HAP-1 (cell line): ENCODE measurements at regions of chr4 and their contacts with region 1.

Region 1: GRCh38 chr4:7802093-7802726 is 137.5 kb downstream of the AFAP1 start:
- DNase-seq: peak; percentile 71 to 87
- H3K4me3 ChIP-seq: no peak overlapping the region
- H3K4me1 ChIP-seq: no peaks in the 10 kb centered on the region
- H3K27me3 ChIP-seq: no peaks in the 10 kb centered on the region

Region 2: DNA sequence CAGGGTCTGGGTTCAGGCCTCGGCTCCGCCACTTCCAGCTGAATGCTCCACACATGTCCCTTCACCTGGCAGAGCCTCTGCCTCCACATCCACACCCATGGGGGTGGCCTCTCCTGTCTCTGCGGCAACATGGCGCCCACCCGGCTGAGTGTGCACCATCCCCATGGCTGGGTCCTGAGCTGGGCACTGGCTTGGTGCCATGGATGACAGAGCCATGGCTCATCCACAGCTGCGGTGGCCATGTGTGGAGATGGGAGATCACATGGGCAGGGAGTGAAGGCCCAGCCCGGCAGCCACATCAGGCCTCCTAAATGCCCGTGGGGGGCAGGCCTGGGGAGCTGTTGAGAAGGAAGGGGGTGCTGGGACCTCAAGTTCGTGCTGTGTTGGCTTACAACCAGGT is 76.3 kb before region 1 on chr4:
- in situ Hi-C with region 1: no loop called
- DNase-seq: no peak
- H3K4me3 ChIP-seq: no peak overlapping the region
- H3K4me1 ChIP-seq: no peaks in the 10 kb centered on the region
- H3K27me3 ChIP-seq: peaks cover 6% of the 10 kb centered on the region; the same call in 1 of the 2 replicates

Region 3: DNA sequence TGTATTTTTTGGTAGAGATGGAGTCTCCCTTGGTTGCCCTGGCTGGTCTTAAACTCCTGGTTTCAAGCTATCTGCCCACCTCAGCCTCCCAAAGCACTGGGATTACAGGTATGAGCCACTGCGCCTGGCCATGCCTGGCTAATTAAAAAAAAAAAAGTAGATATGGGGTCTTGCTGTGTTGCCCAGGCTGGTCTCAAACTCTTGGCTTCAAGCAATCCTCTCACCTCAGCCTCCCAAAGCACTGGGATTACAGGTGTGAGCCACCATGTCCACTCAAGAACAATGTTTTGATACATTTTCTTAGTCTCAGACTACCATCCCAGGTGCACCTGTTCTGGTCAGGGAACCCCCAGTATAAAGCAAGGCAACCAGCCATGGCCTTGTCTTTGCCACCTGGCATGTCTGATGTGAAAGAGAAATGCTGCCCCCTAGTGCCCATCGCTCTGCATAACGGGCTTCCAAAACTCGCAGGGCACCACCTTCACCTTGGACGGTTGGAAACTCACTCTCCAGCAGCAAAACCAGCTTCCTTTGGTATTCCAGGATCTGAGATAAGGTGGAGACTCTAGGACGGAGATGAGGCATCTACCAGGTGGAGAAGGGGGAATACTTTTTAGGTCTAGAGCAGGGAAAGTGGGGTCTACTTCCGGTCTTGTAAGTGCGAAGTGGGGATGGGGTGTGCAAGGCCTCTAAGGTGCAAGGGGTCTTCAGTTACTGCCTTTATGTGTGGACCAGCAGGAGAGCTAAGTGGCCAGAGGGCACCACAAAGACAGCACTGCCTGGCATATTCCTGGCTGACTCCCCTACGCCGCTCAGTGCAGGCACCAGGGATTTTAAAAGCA is 185.2 kb after region 1 on chr4:
- in situ Hi-C with region 1: loop called (anchors 5 kb)
- DNase-seq: peak; percentile 59 to 88
- H3K4me3 ChIP-seq: no peak overlapping the region
- H3K4me1 ChIP-seq: no peaks in the 10 kb centered on the region
- H3K27me3 ChIP-seq: no peaks in the 10 kb centered on the region